CD14-positive monocyte (primary cell): ENCODE measurements at regions of chr12 and their contacts with region 1.

Region 1: GRCh38 chr12:64625243-64626077 is 15.2 kb downstream of the RASSF3 start:
- DNase-seq: peak; percentile 95 to 99 (median 95)
- H3K4me3 ChIP-seq: peak overlapping the region; percentile 13 to 59 (median 39)
- H3K4me3 Mint-ChIP-seq: peak overlapping the region; percentile 72 to 78
- H3K27ac ChIP-seq: peak overlapping the region; percentile 96 to 97
- H3K27ac Mint-ChIP-seq: peak overlapping the region; percentile 97 to 99 (median 99)
- H3K4me1 ChIP-seq: peaks cover 79 to 81% of the 10 kb centered on the region in 2 donors
- H3K4me1 Mint-ChIP-seq: peaks cover 73% of the 10 kb centered on the region
- H3K27me3 ChIP-seq: no peaks in the 10 kb centered on the region
- H3K27me3 Mint-ChIP-seq: peaks cover 0 to 2% (median 0%) of the 10 kb centered on the region in 3 donors
- CTCF ChIP-seq: no peak

Region 2: DNA sequence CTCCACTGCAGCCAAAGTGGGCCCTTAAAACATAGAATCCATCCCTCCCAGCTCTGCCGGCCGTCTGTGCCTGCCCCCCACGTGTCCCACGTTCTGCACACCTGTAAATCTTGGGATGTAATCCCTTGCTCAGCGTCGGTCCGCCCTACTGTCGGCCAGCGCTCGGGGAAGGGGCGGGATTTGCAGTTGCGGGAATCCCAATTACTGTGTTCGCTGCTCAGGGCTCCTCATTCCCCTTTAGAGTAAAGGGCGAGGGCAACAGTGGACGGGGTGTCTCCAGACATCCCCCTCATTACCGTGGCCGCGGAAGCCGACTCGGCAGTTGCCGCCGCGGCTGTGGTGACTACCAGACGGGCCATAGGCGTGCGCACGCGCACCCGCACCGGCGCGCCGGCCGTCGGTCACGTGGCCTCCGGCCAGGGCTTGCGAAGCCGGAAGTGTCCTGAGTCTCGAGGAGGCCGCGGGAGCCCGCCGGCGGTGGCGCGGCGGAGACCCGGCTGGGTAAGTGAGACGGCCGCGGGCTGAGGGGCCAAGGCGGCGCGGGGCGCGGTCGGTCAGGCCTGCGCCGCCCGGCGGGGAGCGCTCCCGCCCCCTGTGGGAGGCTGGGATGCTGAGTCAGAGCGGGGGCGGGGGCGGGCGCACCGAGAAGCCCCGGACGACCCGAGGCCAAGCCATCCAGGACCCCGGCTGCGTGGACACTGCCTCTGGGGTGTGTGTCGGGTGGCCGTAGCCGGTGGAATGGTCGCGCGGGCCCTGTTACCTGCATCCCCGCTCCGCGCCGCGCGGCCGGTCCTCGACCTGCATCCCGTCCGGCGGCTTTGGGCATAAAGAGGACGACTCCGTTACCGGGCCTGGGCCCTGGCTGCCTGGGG is 173.5 kb before region 1 on chr12 and contains the start of gene TBK1:
- intact Hi-C with region 1: loop called in 1 of 2 experiments (anchors 10 kb)
- DNase-seq: peak; percentile 84 to 92 (median 91)
- H3K4me3 ChIP-seq: peak within 1 kb of the TSS; percentile 70 to 98 (median 71)
- H3K4me3 Mint-ChIP-seq: peak within 1 kb of the TSS; percentile 91 to 96
- H3K27ac ChIP-seq: peak within 1 kb of the TSS; percentile 80 to 98
- H3K27ac Mint-ChIP-seq: peak within 1 kb of the TSS; percentile 94 to 97 (median 96)
- H3K4me1 ChIP-seq: peaks cover 13 to 20% of the 10 kb centered on the region in 2 donors
- H3K4me1 Mint-ChIP-seq: peaks cover 24% of the 10 kb centered on the region
- H3K27me3 ChIP-seq: no peaks in the 10 kb centered on the region
- H3K27me3 Mint-ChIP-seq: no peaks in the 10 kb centered on the region
- CTCF ChIP-seq: no peak
- polyA plus RNA-seq, gene TBK1: 14.3 to 24.7 (median 15.5) TPM

Region 3: DNA sequence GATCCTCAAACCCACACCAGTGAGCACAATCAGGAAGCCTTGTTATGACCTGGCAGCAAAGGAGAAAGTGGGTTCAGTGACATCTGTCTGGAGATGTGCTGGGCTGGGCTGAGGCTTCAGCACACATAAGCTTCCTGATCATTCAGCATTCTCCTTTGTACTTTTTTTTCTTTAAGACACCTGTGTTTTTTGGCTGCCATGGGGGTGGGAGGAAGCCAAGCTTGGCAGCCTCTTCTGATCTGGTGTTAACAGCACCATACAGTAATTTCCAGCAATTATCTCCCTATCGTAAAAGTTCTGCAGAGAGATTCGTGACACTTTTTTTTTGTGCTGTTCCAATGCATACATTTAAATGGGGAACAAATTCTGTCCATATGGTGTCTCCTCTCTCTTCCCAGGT is 54.0 kb before region 1 on chr12:
- intact Hi-C with region 1: no loop called
- DNase-seq: no peak
- H3K4me3 ChIP-seq: no peak overlapping the region
- H3K4me3 Mint-ChIP-seq: no peak overlapping the region
- H3K27ac ChIP-seq: no peak overlapping the region
- H3K27ac Mint-ChIP-seq: no peak overlapping the region
- H3K4me1 ChIP-seq: peaks cover 20% of the 10 kb centered on the region in 2 donors
- H3K4me1 Mint-ChIP-seq: peaks cover 26% of the 10 kb centered on the region
- H3K27me3 ChIP-seq: no peaks in the 10 kb centered on the region
- H3K27me3 Mint-ChIP-seq: peaks cover 0 to 3% (median 2%) of the 10 kb centered on the region in 3 donors
- CTCF ChIP-seq: no peak

Region 4: GRCh38 chr12:64650762-64651161 is 25.3 kb after region 1 on chr12:
- intact Hi-C with region 1: no loop called
- DNase-seq: no peak
- H3K4me3 ChIP-seq: no peak overlapping the region
- H3K4me3 Mint-ChIP-seq: no peak overlapping the region
- H3K27ac ChIP-seq: peak overlapping the region in 1 of 2 donors; percentile 2
- H3K27ac Mint-ChIP-seq: peak overlapping the region in 2 of 7 donors; percentile 10 to 15
- H3K4me1 ChIP-seq: peaks cover 12 to 27% of the 10 kb centered on the region in 2 donors
- H3K4me1 Mint-ChIP-seq: peaks cover 48% of the 10 kb centered on the region
- H3K27me3 ChIP-seq: no peaks in the 10 kb centered on the region
- H3K27me3 Mint-ChIP-seq: peaks cover 0 to 2% (median 0%) of the 10 kb centered on the region in 3 donors
- CTCF ChIP-seq: no peak